ENCODE measurements at regions of chr18 and their contacts with region 1.

Region 1: GRCh38 chr18:37476182-37476581 is 89.4 kb downstream of the CELF4 start:
- DNase-seq: no peak
- ATAC-seq: no peak
- H3K4me3 ChIP-seq: no peak overlapping the region
- H3K4me3 Mint-ChIP-seq: no peak overlapping the region
- H3K27ac ChIP-seq: no peak overlapping the region
- H3K27ac Mint-ChIP-seq: no peak overlapping the region
- H3K4me1 ChIP-seq: no peaks in the 10 kb centered on the region
- H3K4me1 Mint-ChIP-seq: peaks cover 0 to 1% (median 0%) of the 10 kb centered on the region in 7 donors
- H3K27me3 ChIP-seq: no peaks in the 10 kb centered on the region
- H3K27me3 Mint-ChIP-seq: peaks cover 5 to 28% (median 23%) of the 10 kb centered on the region in 5 donors

Region 2: GRCh38 chr18:37385846-37386778 is 90.1 kb before region 1 on chr18:
- CTCF ChIA-PET with region 1: no interaction called
- POLR2A ChIA-PET with region 1: no interaction called
- intact Hi-C with region 1: loop called in 1 of 2 experiments (anchors 1 kb)
- DNase-seq: peak in 5 of 9 donors; percentile 13 to 49 (median 30)
- ATAC-seq: no peak
- H3K4me3 ChIP-seq: no peak overlapping the region
- H3K4me3 Mint-ChIP-seq: peak overlapping the region in 1 of 10 donors; percentile 4
- H3K27ac ChIP-seq: no peak overlapping the region
- H3K27ac Mint-ChIP-seq: no peak overlapping the region
- H3K4me1 ChIP-seq: no peaks in the 10 kb centered on the region
- H3K4me1 Mint-ChIP-seq: peaks cover 0 to 6% (median 0%) of the 10 kb centered on the region in 7 donors
- H3K27me3 ChIP-seq: no peaks in the 10 kb centered on the region
- H3K27me3 Mint-ChIP-seq: peaks cover 1 to 16% (median 10%) of the 10 kb centered on the region in 5 donors

Region 3: DNA sequence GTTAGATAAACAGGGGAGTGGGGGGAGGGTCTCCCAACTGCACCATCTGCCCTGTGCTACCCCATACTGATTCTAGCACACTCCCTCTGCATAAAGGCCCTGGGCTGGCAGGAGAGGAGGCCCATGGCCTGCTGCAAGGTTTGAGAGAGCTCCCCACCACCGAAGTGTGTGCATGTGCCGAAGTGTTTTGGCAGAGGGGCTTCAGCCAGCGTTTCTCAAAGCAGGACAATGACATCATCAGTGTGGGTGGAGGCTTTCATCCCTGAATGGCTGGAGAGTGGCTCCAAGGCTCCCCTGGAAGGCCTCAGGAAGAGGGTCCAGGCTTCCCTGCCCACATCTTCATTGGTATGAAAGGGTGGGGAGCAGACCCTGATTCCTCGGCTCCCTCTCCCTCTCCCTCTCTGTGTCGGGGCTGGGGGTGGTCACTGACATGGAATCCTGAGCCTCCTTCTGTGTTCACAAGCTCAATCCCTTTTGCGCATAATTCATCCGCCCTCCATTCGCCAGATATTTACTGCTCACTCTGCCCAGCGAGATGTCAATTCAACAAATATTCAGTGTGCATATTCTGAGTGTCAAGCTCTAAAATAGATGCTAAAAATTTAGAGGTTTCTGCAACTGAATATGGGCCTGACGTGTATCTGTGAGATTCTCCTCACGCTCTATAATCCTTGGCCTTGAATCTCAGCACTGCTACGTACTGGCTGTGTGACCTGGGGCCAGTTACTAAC is 32.7 kb before region 1 on chr18:
- CTCF ChIA-PET with region 1: no interaction called
- POLR2A ChIA-PET with region 1: no interaction called
- intact Hi-C with region 1: loop called in 1 of 2 experiments (anchors 1 kb)
- DNase-seq: no peak
- ATAC-seq: no peak
- H3K4me3 ChIP-seq: no peak overlapping the region
- H3K4me3 Mint-ChIP-seq: no peak overlapping the region
- H3K27ac ChIP-seq: no peak overlapping the region
- H3K27ac Mint-ChIP-seq: peak overlapping the region in 1 of 9 donors; percentile 4
- H3K4me1 ChIP-seq: no peaks in the 10 kb centered on the region
- H3K4me1 Mint-ChIP-seq: peaks cover 0 to 5% (median 0%) of the 10 kb centered on the region in 7 donors
- H3K27me3 ChIP-seq: no peaks in the 10 kb centered on the region
- H3K27me3 Mint-ChIP-seq: peaks cover 0 to 14% (median 9%) of the 10 kb centered on the region in 5 donors

Region 4: DNA sequence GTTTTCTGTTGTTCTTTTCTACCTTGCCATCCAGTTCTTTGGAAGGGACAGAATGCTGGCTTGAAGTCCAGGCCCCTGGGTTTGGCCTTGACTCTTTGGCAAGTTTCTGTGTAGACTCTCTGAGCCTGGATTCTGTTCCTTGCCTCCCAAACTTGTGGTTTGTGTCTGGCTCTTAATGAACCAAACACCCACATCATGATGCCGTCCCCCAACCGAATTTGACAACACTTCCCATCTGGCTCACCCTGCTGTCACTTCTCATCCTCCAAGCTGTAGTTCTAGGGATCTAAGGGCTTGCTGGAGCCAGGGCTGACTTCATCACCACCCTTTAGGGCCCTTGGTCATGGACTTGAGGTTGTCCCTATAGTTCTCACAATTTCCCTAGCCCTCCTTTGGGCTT is 158.3 kb after region 1 on chr18:
- CTCF ChIA-PET with region 1: no interaction called
- POLR2A ChIA-PET with region 1: no interaction called
- intact Hi-C with region 1: no loop called
- DNase-seq: no peak
- ATAC-seq: no peak
- H3K4me3 ChIP-seq: no peak overlapping the region
- H3K4me3 Mint-ChIP-seq: no peak overlapping the region
- H3K27ac ChIP-seq: no peak overlapping the region
- H3K27ac Mint-ChIP-seq: no peak overlapping the region
- H3K4me1 ChIP-seq: no peaks in the 10 kb centered on the region
- H3K4me1 Mint-ChIP-seq: no peaks in the 10 kb centered on the region
- H3K27me3 ChIP-seq: no peaks in the 10 kb centered on the region
- H3K27me3 Mint-ChIP-seq: peaks cover 0 to 13% (median 0%) of the 10 kb centered on the region in 5 donors

Region 5: GRCh38 chr18:37710726-37711125 is 234.5 kb after region 1 on chr18:
- CTCF ChIA-PET with region 1: no interaction called
- POLR2A ChIA-PET with region 1: no interaction called
- intact Hi-C with region 1: no loop called
- DNase-seq: no peak
- ATAC-seq: no peak
- H3K4me3 ChIP-seq: no peak overlapping the region
- H3K4me3 Mint-ChIP-seq: no peak overlapping the region
- H3K27ac ChIP-seq: no peak overlapping the region
- H3K27ac Mint-ChIP-seq: no peak overlapping the region
- H3K4me1 ChIP-seq: no peaks in the 10 kb centered on the region
- H3K4me1 Mint-ChIP-seq: no peaks in the 10 kb centered on the region
- H3K27me3 ChIP-seq: no peaks in the 10 kb centered on the region
- H3K27me3 Mint-ChIP-seq: no peaks in the 10 kb centered on the region